Adrenal gland (tissue), 19 donors: ENCODE measurements at regions of chrX and their contacts with region 1.

Region 1: DNA sequence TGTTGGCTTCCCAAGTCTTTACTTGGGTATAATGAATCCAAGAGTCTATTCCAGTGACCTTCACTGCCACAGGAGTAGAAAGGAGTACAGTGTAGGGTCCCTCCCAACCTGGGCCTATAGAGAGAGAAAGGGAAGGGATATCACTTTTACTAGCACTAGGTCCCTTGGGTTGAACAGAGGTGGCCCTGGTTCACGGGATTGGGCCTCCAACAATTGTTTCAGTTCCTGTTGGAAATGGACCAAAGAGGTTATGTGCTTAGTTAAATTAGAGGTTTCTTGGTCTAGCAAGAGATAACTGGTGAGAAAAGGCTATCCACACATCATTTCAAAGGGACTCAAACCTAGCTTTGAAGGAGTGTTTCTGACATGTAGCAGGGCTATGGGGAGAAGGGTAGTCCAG is 57.1 kb upstream of the MED14 start:
- DNase-seq: no peak
- H3K4me3 ChIP-seq: no peak overlapping the region
- H3K27ac ChIP-seq: no peak overlapping the region
- H3K4me1 ChIP-seq: no peaks in the 10 kb centered on the region
- H3K27me3 ChIP-seq: peaks cover 11% of the 10 kb centered on the region
- CTCF ChIP-seq: no peak
- POLR2A ChIP-seq: no peak

Region 2: DNA sequence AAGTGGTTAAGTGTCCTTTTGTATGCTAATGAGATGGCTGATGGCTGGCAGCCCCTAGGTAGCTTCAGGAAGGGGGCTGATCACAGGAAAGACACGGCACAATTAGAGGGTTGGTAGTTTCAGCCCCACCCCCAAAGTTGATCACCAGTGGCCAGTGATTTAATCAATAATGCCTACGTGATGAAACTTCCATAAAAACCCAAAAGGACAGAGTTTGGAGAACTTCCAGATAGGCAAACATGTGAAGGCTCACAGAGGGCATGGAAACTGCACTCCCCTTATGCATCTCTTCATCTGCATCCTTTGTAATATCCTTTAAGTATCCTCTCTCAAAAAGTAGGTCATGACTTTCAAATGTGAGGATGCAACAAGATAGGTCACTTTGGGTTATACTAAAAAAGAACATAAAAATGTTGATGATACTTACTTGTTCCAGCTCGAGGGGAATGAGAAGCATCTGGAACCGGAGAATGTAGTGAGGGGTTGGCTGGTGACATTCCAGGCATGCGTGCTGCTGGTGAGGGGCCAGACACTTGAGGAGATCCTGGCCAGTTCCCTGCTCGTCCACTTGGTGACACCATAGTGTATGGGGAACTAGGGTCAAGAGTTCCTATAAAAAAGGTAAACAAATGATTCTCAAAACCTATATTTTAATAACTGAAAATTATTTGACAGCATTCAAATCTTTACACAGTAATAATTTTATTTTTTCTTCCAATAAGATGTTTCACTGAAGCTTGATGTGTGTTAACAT is 128.4 kb before region 1 on chrX:
- intact Hi-C with region 1: loop called (anchors 10 kb)
- DNase-seq: peak in 1 of 7 donors; percentile 9
- H3K4me3 ChIP-seq: no peak overlapping the region
- H3K27ac ChIP-seq: no peak overlapping the region
- H3K4me1 ChIP-seq: no peaks in the 10 kb centered on the region
- H3K27me3 ChIP-seq: no peaks in the 10 kb centered on the region
- CTCF ChIP-seq: peak in 3 of 6 experiments; percentile 19 to 36 (median 20)
- POLR2A ChIP-seq: no peak

Region 3: DNA sequence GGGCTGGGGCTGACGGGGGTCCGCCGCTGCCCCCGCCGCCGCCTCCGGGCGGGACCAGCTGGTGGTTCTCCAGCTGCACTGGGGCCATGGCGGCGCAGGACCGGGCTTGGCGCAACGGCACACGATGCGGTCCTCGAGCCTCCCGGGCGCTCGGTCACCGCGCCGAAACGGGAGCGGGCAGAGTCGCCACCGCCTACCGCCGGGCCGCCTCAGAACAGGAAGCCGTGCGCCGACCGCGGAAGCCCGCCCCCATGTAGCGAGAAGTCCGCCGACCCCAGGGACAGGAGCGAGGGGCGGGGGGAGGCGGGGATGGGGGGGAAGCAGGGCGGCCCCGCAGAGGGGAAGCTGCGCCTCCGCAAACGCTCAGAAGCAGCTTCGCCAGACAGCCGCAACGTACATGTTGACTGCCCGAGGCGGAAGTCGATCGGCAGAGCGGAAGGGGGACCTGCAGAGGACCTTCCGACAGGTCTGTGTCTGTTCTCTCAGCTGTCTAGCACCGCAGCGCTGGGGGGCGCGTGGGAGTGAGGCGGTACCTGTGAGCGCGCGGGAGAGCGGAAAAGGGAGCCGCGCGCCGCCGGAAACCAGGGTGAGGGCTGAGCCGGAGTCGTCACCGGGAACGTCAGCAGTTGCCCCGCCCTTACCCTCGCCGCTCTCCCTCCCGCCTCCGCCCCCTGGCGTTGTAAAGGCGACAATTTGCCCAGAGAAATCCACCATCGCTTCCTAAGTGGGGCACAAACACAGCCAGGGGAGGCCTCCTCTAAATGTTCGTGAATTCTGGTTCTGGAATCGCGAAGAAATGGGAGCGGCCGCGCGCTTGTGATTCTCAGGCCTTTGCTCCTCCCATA is 56.9 kb before region 1 on chrX and contains the start of gene MED14:
- intact Hi-C with region 1: loop called in 1 of 2 experiments (anchors 10 kb)
- DNase-seq: peak; percentile 83 to 91 (median 87)
- H3K4me3 ChIP-seq: peak within 1 kb of the TSS in 3 of 4 donors; percentile 4 to 99 (median 83)
- H3K27ac ChIP-seq: peak within 1 kb of the TSS; percentile 81 to 97 (median 94)
- H3K4me1 ChIP-seq: peaks cover 0 to 4% of the 10 kb centered on the region in 2 donors
- H3K27me3 ChIP-seq: peaks cover 6% of the 10 kb centered on the region
- CTCF ChIP-seq: peak; percentile 25 to 64 (median 54)
- POLR2A ChIP-seq: peak; percentile 10 to 71
- total RNA-seq, gene MED14: 14.6 to 56.3 (median 31.7) TPM